ENCODE measurements at regions of chr11 and their contacts with region 1.

Region 1: DNA sequence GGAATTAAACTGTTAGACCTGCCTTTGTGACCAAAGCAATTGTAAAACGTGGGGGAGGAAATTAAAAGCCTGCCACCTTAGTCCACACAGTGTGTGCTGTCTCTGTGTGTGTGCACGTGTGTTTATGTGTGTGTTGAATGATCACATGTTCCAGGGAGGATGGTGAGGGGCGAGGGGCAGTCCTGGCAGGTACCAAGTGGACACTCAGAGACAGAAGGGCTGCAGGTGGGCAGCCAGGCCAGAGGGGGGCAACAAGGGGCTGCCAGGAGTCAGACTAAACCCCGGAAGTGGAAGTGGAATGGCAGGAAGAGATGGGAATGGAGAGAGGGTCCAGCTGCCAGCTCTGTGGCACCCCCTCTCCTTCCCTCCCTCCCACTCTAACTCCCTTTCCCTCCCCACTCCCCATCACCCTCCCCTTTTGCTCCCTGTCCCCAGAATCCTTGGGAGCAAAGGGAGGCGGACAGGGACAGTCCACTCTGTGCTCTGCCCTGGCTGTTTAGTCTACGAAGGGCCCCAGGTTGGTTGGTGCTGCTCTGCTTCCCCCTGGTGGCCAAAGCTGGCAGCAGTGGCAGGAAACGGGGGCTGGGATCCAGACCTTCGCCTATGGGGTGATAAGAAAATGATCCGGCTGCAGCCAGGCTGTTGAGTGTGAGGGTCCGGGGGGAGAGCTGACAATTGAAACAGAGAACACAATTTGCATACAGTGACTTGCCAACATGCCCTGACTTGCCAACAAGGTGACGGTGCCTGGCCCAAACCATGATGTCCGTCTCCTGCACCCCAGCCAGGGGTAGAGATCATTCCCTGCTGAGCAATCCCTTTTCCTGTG is 24.4 kb downstream of the P2RY2 start:
- DNase-seq: peak; percentile 80
- H3K4me3 Mint-ChIP-seq: no peak overlapping the region
- H3K27ac Mint-ChIP-seq: no peak overlapping the region
- H3K4me1 Mint-ChIP-seq: peaks cover 2% of the 10 kb centered on the region
- H3K27me3 Mint-ChIP-seq: no peaks in the 10 kb centered on the region

Region 2: GRCh38 chr11:72831513-72832300 is 410.8 kb before region 1 on chr11:
- CTCF ChIA-PET with region 1: no interaction called
- intact Hi-C with region 1: loop called (anchors 2 kb)
- DNase-seq: peak; percentile 76
- H3K4me3 Mint-ChIP-seq: no peak overlapping the region
- H3K27ac Mint-ChIP-seq: peak overlapping the region; percentile 51
- H3K4me1 Mint-ChIP-seq: peaks cover 11% of the 10 kb centered on the region
- H3K27me3 Mint-ChIP-seq: no peaks in the 10 kb centered on the region

Region 3: DNA sequence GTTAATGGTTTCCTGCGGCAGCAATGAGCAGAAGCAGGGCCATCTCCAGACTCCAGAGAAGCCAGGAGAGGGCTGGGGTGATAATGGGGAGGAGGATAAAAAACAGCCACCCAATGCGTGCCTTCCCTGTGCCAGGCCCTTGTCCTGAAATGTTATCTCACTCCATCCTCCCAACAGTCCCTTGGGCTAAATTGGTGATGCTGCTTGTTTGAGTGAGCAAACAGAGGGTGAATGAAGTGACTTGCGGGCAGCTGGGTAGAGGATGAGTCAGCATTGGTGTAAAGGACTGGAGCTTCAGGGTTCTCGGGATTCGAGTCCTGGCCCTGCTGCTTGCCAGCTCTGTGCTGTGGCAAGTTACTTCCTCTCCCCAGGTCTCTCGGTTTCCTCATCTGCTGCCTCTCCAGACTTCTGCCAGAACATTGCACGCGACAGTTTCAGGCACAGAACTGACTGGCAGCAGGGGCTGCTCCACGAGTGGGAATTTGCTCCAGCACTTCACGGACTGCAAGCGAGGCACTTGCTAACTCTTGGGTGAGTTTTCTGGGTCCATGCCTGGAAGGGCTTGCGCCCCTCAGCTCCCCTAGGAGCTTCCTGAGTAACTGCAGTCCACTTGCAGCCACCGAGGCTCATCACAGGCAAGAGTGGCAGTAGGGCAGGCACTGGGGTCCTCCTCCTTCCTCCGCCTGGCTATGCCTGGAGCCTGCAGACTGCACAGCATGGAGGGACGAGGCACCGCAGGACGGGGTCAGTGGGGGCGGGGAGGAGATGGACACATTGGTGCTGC is 29.7 kb after region 1 on chr11 and contains the start of gene P2RY6:
- CTCF ChIA-PET with region 1: no interaction called
- intact Hi-C with region 1: no loop called
- DNase-seq: no peak
- H3K4me3 Mint-ChIP-seq: no peak within 1 kb of the TSS
- H3K27ac Mint-ChIP-seq: no peak within 1 kb of the TSS
- H3K4me1 Mint-ChIP-seq: no peaks in the 10 kb centered on the region
- H3K27me3 Mint-ChIP-seq: no peaks in the 10 kb centered on the region
- total RNA-seq, gene P2RY6: not detected

Region 4: DNA sequence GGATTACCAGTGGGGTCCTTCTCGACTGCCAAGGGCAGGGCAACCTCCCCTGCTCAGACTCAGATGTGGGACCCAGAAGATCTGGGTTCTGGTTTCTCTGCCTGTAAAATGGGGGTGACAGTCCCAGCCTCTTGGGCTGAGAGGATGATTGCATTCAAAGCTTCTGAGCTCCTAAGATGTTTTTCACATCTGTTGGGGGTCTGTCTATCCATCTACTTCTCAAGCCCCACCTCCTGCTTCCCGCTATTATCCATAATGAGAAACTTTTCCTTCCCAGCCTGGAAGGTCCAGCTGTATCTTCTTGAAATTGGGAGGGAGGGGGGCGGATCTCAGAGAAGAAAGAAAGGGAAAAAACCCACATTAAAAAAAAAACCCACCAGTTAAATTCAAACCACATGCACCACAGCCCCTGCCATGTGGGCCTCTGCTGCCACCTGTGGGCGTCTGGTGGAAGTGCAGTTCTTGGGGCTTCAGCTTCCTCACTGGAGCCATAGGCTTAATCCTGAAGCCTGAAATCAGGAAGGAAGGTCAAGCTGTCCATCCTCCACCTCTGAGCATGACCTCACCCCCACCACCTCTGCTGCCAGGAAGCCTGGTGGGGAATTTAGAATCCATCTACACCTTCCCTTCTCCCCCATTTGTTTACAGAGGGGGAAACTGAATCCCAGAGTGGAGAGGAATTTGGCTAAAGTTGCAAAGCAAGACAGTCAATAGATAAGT is 92.9 kb after region 1 on chr11:
- CTCF ChIA-PET with region 1: no interaction called
- intact Hi-C with region 1: no loop called
- DNase-seq: peak; percentile 87
- H3K4me3 Mint-ChIP-seq: no peak overlapping the region
- H3K27ac Mint-ChIP-seq: no peak overlapping the region
- H3K4me1 Mint-ChIP-seq: no peaks in the 10 kb centered on the region
- H3K27me3 Mint-ChIP-seq: no peaks in the 10 kb centered on the region

Measured in activated naive CD4-positive, alpha-beta T cell treated with anti-CD3 and anti-CD28 coated beads for 36 hours (primary cell).